ENCODE measurements at regions of chr17 and their contacts with region 1.

Region 1: DNA sequence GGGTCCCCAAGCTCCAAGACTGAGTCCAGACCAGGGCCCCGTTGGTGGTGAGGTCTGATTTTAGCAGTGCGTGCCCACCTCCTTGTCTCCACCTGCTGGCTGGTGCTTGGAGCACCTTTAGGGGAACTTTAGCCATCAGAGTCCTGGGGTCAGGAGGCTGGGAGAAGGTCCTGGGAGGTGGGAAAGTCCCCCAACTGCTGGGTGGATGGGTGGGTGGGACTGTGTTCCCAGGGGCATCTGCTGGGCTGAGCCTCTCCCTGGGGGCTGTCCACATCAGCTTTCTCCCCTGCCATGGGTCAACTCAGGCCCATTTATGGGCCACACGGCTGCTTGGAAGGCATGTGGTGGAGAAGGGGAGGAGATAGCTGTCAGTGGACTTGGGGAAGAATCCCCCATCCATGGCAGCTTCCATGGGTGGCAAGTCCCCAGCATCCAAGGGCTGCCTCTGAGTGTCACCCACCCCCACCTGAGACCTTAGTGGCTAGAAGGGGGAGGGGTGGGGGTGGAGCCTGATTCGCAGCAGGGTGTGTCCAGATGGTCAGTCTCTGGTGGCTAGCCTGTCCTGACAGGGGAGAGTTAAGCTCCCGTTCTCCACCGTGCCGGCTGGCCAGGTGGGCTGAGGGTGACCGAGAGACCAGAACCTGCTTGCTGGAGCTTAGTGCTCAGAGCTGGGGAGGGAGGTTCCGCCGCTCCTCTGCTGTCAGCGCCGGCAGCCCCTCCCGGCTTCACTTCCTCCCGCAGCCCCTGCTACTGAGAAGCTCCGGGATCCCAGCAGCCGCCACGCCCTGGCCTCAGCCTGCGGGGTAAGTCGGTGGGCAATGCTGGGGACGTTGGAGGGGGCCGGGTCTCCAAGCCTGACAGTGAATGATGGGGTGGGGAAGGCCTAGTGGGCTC is at the start of gene TRPV2:
- DNase-seq: peak; percentile 79
- ATAC-seq: peak; percentile 19
- H3K4me3 Mint-ChIP-seq: peak within 1 kb of the TSS; percentile 100
- H3K27ac Mint-ChIP-seq: peak within 1 kb of the TSS; percentile 99
- H3K4me1 Mint-ChIP-seq: peaks cover 49% of the 10 kb centered on the region
- H3K27me3 Mint-ChIP-seq: no peaks in the 10 kb centered on the region
- CTCF ChIP-seq: peak; percentile 65
- total RNA-seq, gene TRPV2: 44.6 to 47.6 TPM

Region 2: DNA sequence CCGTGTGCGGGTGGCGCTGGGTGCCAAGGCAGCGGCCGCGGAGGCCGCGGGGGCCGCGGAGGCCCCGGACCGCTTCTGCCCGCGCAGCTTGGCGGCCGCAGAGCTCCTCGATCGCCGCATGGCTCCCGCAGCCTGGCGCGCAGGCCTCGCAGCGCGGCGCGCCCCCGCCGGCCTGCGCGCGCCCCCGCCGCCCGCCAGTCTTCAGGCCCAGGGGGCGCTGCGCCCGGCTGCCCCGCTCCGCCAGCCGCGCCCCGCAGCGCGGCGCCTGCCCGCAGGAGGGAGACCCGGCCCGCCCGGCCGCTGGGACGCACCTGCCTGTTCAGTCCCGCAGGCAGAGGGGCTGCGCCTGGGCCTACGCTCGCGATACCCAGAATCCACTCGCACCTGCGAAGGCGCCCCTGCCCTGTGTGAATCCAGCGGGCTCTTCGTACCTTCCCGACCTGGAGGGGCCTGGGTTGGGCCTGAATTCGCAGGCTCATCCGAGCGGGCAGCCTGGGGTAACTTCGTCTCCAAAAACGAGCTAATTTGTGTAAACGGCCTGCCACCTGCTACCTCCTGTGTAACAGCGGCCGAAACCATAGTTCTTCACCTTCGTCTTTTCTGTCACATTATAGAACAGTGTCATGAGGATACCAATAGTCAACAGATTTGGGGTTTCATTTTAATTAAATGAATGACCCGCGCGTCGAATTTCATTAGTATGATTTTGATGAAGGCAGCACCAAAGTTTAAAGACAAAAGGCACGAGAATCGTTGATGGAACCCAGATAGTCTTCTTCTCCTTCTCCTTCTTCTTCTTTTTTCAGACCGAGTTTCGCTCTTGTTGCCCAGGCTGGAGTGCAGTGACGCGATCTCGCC is 61.7 kb before region 1 on chr17 and contains the start of gene CENPV:
- CTCF ChIA-PET with region 1: interaction called, 19 read pairs
- POLR2A ChIA-PET with region 1: interaction called, 45 read pairs
- intact Hi-C with region 1: loop called (anchors 5 kb)
- DNase-seq: peak; percentile 66
- ATAC-seq: peak; percentile 82
- H3K4me3 Mint-ChIP-seq: peak within 1 kb of the TSS; percentile 97
- H3K27ac Mint-ChIP-seq: peak within 1 kb of the TSS; percentile 93
- H3K4me1 Mint-ChIP-seq: peaks cover 18% of the 10 kb centered on the region
- H3K27me3 Mint-ChIP-seq: no peaks in the 10 kb centered on the region
- CTCF ChIP-seq: peak; percentile 9
- total RNA-seq, gene CENPV: 139 to 142 TPM

Region 3: GRCh38 chr17:16380640-16381495 is 34.4 kb before region 1 on chr17 and contains the start of gene UBB:
- CTCF ChIA-PET with region 1: interaction called, 31 read pairs
- POLR2A ChIA-PET with region 1: interaction called, 44 read pairs
- intact Hi-C with region 1: loop called (anchors 5 kb)
- DNase-seq: peak; percentile 97
- ATAC-seq: peak; percentile 95
- H3K4me3 Mint-ChIP-seq: peak within 1 kb of the TSS; percentile 94
- H3K27ac Mint-ChIP-seq: peak within 1 kb of the TSS; percentile 95
- H3K4me1 Mint-ChIP-seq: peaks cover 33% of the 10 kb centered on the region
- H3K27me3 Mint-ChIP-seq: no peaks in the 10 kb centered on the region
- CTCF ChIP-seq: no peak
- total RNA-seq, gene UBB: 1,334 to 1,337 TPM

Region 4: DNA sequence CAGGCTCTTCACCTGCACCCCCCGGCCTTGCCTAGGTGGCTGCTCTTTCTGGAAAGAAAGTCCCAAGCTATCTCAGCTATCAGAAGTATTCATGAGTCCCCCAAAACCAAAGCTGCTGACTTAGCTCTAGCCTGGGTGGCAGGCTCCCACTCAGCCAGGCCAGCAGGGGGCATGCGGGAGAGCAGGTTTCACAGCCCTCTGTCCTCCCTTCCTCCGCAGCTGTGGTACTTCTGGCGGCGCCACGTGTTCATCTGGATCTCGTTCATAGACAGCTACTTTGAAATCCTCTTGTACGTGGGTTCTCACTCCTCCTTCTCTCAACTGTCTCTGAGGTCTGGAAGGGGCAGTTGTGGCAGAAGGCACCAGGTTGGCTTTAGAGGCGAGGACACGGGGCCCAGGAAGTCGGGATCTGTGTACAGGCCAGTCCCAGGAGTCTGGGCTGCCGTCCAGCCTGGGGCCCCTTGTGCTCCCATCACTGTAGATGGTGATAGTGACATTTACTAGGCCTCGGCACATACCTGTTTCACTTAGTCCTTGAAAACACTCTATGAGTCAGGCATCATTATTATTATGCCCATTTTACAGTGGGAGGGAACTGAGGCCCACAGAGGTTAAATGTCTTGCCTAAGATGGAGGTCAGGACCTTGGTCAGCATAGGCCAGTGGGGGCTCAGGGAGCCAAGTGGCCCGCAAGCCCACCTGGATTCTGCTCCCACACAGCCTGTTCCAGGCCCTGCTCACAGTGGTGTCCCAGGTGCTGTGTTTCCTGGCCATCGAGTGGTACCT is 13.0 kb after region 1 on chr17:
- CTCF ChIA-PET with region 1: interaction called, 38 read pairs
- POLR2A ChIA-PET with region 1: interaction called, 3 read pairs
- intact Hi-C with region 1: no loop called
- DNase-seq: peak; percentile 75
- ATAC-seq: peak; percentile 91
- H3K4me3 Mint-ChIP-seq: no peak overlapping the region
- H3K27ac Mint-ChIP-seq: peak overlapping the region; percentile 42
- H3K4me1 Mint-ChIP-seq: peaks cover 7% of the 10 kb centered on the region
- H3K27me3 Mint-ChIP-seq: no peaks in the 10 kb centered on the region
- CTCF ChIP-seq: peak; percentile 59

Region 5: GRCh38 chr17:16584273-16584995 is 169.2 kb after region 1 on chr17:
- CTCF ChIA-PET with region 1: no interaction called
- POLR2A ChIA-PET with region 1: no interaction called
- intact Hi-C with region 1: no loop called
- DNase-seq: peak; percentile 97
- ATAC-seq: peak; percentile 99
- H3K4me3 Mint-ChIP-seq: peak overlapping the region; percentile 74
- H3K27ac Mint-ChIP-seq: peak overlapping the region; percentile 80
- H3K4me1 Mint-ChIP-seq: peaks cover 11% of the 10 kb centered on the region
- H3K27me3 Mint-ChIP-seq: peaks cover 22% of the 10 kb centered on the region
- CTCF ChIP-seq: peak; percentile 84

Region 6: DNA sequence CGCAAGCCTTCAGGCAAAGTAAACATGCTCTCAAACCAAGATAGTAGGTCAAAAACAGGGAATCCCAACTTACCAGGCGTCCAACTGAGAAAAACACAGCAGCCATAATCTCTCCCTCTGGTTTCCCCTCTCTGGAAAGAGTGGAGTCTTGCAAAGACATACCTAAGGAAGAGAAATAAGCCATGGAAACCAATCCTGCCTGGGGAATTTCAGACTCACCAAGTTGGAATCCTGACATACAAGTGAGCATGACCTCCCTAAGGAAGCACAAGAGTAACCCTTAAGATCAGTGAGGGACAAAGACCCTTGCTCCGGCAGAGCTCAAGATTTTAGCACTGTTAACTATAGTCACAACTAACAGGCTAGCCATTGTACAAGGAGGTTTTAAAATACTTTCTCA is 234.3 kb after region 1 on chr17:
- CTCF ChIA-PET with region 1: no interaction called
- POLR2A ChIA-PET with region 1: no interaction called
- intact Hi-C with region 1: no loop called
- DNase-seq: no peak
- ATAC-seq: no peak
- H3K4me3 Mint-ChIP-seq: no peak overlapping the region
- H3K27ac Mint-ChIP-seq: no peak overlapping the region
- H3K4me1 Mint-ChIP-seq: peaks cover 17% of the 10 kb centered on the region
- H3K27me3 Mint-ChIP-seq: no peaks in the 10 kb centered on the region
- CTCF ChIP-seq: no peak

Measured in activated CD8-positive, alpha-beta T cell treated with anti-CD3 and anti-CD28 coated beads for 36 hours (primary cell).